ENCODE measurements at regions of chr7 and their contacts with region 1.

Region 1: GRCh38 chr7:130393101-130393561 is 12.8 kb downstream of the CPA1 start:
- DNase-seq: no peak
- ATAC-seq: no peak
- H3K4me3 Mint-ChIP-seq: peak overlapping the region in 3 of 10 donors; percentile 21 to 91 (median 88)
- H3K27ac Mint-ChIP-seq: peak overlapping the region; percentile 92 to 99 (median 97)
- H3K4me1 Mint-ChIP-seq: peaks cover 21 to 45% (median 34%) of the 10 kb centered on the region in 4 donors
- H3K27me3 Mint-ChIP-seq: no peaks in the 10 kb centered on the region

Region 2: DNA sequence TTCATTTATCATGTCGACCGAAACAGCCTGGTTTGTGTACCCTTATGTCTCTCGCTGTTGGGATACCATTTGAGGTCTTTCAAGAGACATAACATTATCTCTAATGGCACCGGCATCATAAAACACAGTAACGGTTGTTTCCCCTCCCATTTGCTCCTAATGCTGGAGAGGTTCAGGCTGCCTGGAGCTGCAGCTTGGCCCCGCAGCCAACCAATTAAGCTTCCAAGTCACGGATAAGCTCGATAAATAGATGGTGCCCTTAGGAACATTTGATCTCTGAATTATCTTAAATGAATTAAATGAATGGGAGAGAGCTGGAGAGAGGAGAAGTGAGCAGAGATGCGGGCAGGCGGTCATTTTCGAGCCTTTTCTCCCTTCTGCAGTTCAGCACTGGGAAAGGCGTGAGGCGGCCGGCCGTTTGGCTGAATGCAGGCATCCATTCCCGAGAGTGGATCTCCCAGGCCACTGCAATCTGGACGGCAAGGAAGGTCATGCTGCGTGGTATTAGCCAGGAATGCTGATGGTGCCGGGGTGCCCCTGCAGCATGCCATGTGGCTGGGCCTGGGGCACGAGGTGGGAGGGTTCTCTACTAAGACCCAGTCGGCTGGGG is 87.6 kb before region 1 on chr7:
- POLR2A ChIA-PET with region 1: no interaction called
- DNase-seq: no peak
- ATAC-seq: no peak
- H3K4me3 Mint-ChIP-seq: no peak overlapping the region
- H3K27ac Mint-ChIP-seq: no peak overlapping the region
- H3K4me1 Mint-ChIP-seq: peaks cover 0 to 11% (median 4%) of the 10 kb centered on the region in 4 donors
- H3K27me3 Mint-ChIP-seq: no peaks in the 10 kb centered on the region

Region 3: DNA sequence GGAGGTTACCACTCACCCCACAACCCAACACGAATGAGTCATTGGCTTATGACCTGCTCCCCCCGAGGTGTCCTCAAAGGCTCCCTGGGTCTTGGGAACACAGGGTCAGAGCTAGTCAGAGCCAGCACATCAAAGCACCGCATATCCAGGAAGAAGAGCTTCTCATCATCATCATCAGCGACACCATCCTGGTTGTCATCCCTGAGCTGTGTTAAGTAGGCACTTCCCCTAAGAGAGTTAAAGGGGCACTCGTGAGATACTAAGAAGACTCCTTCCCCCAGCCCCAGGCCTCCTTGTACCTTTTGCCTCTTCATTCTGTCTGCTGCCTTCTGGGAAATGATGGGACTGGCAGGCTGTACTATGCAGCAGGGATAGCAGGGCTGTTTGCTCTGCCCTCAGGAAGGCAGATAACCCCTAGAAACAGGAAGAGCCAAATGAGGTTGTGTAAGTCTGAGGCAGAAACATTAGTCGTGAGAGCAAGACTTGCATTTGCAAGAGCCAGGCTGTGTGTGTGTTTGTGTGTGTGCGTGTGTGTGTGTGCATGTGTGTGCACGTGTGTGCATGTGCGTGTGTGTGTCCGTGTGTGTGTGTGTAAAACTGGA is 23.9 kb before region 1 on chr7:
- POLR2A ChIA-PET with region 1: interaction called, 12 read pairs
- DNase-seq: peak in 3 of 10 donors; percentile 19 to 21 (median 19)
- ATAC-seq: peak; percentile 13 to 23
- H3K4me3 Mint-ChIP-seq: peak overlapping the region in 9 of 10 donors; percentile 69 to 90 (median 86)
- H3K27ac Mint-ChIP-seq: peak overlapping the region; percentile 71 to 98 (median 92)
- H3K4me1 Mint-ChIP-seq: peaks cover 17 to 76% (median 47%) of the 10 kb centered on the region in 4 donors
- H3K27me3 Mint-ChIP-seq: no peaks in the 10 kb centered on the region

Region 4: DNA sequence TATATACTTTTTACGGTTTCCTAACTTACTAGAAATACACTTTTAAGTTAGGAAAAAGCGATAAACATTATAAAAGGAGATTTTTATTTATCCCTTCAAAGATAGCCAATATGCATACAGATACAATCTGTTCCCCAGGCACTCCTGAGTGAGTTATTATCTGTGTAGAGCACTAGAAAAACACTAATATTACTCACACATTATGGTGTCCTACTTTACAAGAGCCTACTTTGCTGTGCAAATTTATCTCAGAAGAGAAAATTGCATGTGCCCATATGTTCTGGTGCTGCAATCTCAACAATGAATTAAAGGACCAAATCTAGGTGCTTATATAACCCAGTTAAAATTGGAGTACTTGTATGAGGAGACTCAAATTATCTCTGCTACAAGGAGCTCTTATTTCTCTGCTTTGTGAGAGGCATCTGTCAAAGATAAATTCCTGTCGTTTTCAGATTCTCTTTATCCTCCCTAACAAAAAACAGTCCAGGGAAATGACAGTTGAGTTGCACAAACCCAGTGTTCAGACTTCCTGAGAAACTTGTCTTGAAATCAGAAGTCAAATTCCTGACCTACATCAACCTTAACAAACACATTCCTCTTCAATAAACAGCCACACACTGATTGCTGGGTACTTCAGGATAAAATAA is 16.1 kb after region 1 on chr7:
- POLR2A ChIA-PET with region 1: interaction called, 13 read pairs
- DNase-seq: no peak
- ATAC-seq: no peak
- H3K4me3 Mint-ChIP-seq: peak overlapping the region in 6 of 10 donors; percentile 15 to 80 (median 37)
- H3K27ac Mint-ChIP-seq: peak overlapping the region; percentile 4 to 89 (median 82)
- H3K4me1 Mint-ChIP-seq: peaks cover 27 to 57% (median 43%) of the 10 kb centered on the region in 4 donors
- H3K27me3 Mint-ChIP-seq: no peaks in the 10 kb centered on the region

Region 5: DNA sequence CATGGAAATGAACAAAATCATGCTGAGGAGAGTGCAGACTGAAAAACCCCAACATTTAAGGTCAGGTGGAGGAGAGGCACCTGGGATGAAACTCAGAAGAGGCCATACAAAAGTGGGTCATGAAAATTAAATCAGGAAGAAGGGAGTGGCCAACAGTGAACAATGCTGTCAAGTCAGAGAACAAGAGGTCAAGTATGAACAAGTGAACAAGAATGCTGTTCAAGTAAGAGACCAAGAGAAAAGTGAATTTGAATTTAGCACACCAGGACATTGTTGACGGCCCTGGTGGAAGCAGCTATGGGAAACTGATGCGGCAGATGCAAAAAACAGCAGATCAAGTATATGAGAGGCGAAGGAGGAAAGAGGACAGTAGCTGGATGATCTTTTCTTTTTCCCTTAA is 39.8 kb after region 1 on chr7:
- POLR2A ChIA-PET with region 1: interaction called, 10 read pairs
- DNase-seq: no peak
- ATAC-seq: peak in 1 of 2 donors; percentile 18
- H3K4me3 Mint-ChIP-seq: no peak overlapping the region
- H3K27ac Mint-ChIP-seq: no peak overlapping the region
- H3K4me1 Mint-ChIP-seq: peaks cover 18 to 36% (median 25%) of the 10 kb centered on the region in 4 donors
- H3K27me3 Mint-ChIP-seq: no peaks in the 10 kb centered on the region

Region 6: DNA sequence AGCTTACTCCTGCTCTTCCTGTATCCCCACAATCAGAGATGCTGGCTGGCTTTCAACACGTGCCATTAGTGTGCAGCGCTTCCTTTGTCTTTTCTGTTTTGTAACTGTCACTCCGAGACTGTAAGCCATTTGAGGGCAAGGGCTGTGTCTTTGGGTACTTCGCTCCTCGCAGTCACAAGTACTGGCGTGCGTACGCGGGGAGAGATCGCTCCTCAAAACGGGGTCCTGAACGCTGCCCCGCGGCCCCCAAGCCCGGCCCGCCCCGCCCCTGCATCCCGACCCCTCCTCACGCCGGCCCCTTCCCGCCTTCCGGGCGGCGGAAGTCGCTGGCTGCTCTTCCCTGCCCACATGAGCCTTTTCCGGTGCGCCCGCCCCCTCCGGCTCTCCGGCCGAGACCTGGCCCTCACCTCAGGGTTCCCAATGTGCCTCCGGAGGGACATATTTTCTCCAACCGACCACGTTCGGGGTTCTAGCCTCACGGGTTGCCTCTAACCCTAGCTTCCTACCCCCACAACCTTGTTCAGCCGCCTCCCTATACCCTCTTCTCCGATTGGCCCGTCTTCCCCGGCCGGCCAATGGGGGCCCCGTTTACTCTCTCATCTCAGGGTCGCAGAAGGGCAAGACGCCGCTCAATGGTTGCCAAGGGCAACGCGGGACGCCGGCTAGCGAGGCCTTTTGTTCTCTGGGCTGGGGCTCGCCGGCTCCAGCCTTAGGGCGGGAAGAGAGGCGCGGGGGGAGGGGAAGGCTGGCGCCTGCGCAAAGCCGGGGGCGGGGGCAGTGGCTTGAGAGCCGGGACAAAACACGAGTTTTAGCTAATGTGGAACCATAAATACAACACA is 47.6 kb after region 1 on chr7 and contains the start of gene CEP41:
- POLR2A ChIA-PET with region 1: interaction called, 16 read pairs
- DNase-seq: peak; percentile 86 to 96 (median 94)
- ATAC-seq: peak; percentile 94 to 98
- H3K4me3 Mint-ChIP-seq: peak within 1 kb of the TSS; percentile 97 to 100 (median 99)
- H3K27ac Mint-ChIP-seq: peak within 1 kb of the TSS; percentile 93 to 99 (median 98)
- H3K4me1 Mint-ChIP-seq: peaks cover 35 to 71% (median 52%) of the 10 kb centered on the region in 4 donors
- H3K27me3 Mint-ChIP-seq: no peaks in the 10 kb centered on the region
- polyA plus RNA-seq, gene CEP41: 54.8 to 74.5 (median 61.0) TPM

Measured in naive thymus-derived CD8-positive, alpha-beta T cell (primary cell).